Heart right ventricle (tissue), 16 donors: ENCODE measurements at regions of chr9 and their contacts with region 1.

Region 1: DNA sequence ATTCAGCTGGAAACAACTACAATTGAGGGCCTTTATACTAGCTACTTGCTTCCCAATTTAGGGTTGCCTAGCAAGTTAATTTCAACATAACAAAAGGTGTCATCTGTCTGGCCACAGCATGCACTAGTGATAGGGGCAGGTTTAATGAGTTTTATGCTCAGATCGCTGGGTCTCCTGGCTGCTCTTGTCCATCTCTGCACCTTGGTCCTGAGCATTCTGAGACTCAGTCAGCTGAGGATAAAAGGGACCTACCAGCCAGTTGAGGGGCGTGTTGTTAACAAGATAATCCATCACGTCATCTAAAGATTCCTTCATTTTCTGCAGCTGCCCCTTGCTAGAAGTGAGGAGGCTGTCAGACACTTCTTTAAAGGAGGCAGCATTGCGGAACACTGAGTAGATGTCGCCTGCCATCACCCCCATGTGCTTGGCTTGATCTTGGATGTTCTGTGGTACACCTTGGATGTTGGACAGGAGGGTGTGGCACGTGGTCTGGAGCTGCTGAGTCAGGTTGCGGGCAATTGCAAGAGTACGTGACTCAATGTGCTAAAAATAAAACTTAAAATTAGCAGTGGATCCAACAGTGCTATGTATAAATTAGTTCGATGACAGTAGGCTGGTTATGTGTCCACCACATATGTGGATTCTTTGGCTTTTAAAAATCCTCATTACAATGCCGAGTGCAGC is 11.0 kb downstream of the PLIN2 start:
- DNase-seq: peak; percentile 44 to 59
- ATAC-seq: peak; percentile 78 to 97 (median 89)
- H3K4me3 ChIP-seq: no peak overlapping the region
- H3K27ac ChIP-seq: peak overlapping the region in 9 of 10 donors; percentile 27 to 70 (median 45)
- H3K4me1 ChIP-seq: peaks cover 0 to 57% (median 19%) of the 10 kb centered on the region in 9 donors
- H3K27me3 ChIP-seq: no peaks in the 10 kb centered on the region
- CTCF ChIP-seq: no peak

Region 2: DNA sequence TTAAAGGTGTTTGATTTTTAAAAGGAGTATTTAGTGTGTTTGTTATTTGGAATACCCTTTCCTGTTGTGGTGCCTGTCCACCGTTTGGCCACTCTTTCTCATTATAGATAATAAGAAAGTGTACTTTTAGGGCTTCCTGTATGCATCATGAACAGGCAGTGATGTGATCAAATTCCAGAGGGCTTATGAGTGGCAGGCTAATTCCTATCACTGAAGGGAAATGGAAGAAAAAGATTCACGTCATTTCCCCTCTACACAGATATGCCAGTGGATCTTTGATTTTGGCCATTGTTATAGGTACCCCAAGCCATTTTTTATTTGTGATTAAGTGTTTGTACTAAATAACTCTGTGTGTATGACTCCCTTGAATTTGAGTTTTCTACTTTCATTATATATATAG is 226.7 kb after region 1 on chr9:
- intact Hi-C with region 1: loop called in 1 of 10 experiments (anchors 10 kb)
- DNase-seq: no peak
- ATAC-seq: peak in 1 of 8 donors; percentile 35
- H3K4me3 ChIP-seq: no peak overlapping the region
- H3K27ac ChIP-seq: peak overlapping the region in 1 of 10 donors; percentile 9
- H3K4me1 ChIP-seq: peaks cover 0 to 4% (median 0%) of the 10 kb centered on the region in 9 donors
- H3K27me3 ChIP-seq: no peaks in the 10 kb centered on the region
- CTCF ChIP-seq: no peak